Activated naive CD4-positive, alpha-beta T cell treated with anti-CD3 and anti-CD28 coated beads for 36 hours (primary cell): ENCODE measurements at regions of chr4 and their contacts with region 1.

Region 1: GRCh38 chr4:139656614-139657486 is 8.8 kb upstream of the MGST2 start:
- DNase-seq: peak; percentile 67
- H3K4me3 Mint-ChIP-seq: peak overlapping the region; percentile 57
- H3K27ac Mint-ChIP-seq: peak overlapping the region; percentile 83
- H3K4me1 Mint-ChIP-seq: peaks cover 24% of the 10 kb centered on the region
- H3K27me3 Mint-ChIP-seq: peaks cover 2% of the 10 kb centered on the region

Region 2: GRCh38 chr4:138734746-138735145 is 922.1 kb before region 1 on chr4:
- CTCF ChIA-PET with region 1: no interaction called
- intact Hi-C with region 1: no loop called
- DNase-seq: no peak
- H3K4me3 Mint-ChIP-seq: no peak overlapping the region
- H3K27ac Mint-ChIP-seq: no peak overlapping the region
- H3K4me1 Mint-ChIP-seq: no peaks in the 10 kb centered on the region
- H3K27me3 Mint-ChIP-seq: peaks cover 2% of the 10 kb centered on the region

Region 3: GRCh38 chr4:139266583-139267257 is 390.1 kb before region 1 on chr4:
- CTCF ChIA-PET with region 1: no interaction called
- intact Hi-C with region 1: loop called (anchors 1 kb)
- DNase-seq: peak; percentile 91
- H3K4me3 Mint-ChIP-seq: peak overlapping the region; percentile 52
- H3K27ac Mint-ChIP-seq: peak overlapping the region; percentile 60
- H3K4me1 Mint-ChIP-seq: peaks cover 18% of the 10 kb centered on the region
- H3K27me3 Mint-ChIP-seq: no peaks in the 10 kb centered on the region

Region 4: GRCh38 chr4:139685180-139685579 is 28.3 kb after region 1 on chr4:
- CTCF ChIA-PET with region 1: interaction called, 3 read pairs
- intact Hi-C with region 1: loop called (anchors 1 kb)
- DNase-seq: peak; percentile 34
- H3K4me3 Mint-ChIP-seq: no peak overlapping the region
- H3K27ac Mint-ChIP-seq: no peak overlapping the region
- H3K4me1 Mint-ChIP-seq: peaks cover 5% of the 10 kb centered on the region
- H3K27me3 Mint-ChIP-seq: no peaks in the 10 kb centered on the region

Region 5: DNA sequence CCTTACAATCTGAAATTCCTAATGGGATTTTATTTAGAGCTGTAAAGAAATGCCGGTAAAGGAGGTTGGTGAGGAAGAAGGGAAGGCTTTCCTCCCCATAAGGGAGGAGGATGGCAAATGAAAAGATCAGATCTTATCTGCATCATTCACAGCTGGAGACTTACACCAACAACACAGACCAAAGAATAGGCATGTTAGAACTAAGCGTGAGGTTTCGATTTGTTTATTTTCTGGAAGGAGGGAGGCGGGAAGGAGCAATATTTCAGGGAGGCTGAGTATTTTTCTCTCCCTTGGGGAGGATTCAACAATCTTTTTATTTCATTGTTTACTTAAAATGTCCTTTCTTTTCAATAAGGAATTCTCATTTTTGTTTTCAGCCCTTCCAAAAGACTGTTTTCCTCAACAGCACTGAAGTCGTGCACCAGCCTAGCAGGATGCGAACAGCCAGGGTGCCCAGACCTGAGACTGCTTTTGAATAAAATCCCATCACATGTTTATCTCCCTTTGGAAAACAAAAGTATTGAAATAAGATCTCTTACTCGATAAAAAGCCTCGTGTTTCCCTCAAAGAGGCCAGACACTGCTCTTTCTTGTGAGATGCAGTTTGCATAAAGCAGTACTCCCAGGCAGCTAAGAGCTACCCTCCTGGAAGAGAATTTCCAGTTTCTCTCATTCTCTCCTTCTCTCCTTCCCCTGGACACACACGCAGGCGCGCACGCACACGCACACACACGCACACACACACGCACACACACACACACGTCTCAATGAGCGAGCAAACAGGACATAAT is 244.9 kb after region 1 on chr4:
- CTCF ChIA-PET with region 1: no interaction called
- intact Hi-C with region 1: loop called (anchors 2 kb)
- DNase-seq: no peak
- H3K4me3 Mint-ChIP-seq: no peak overlapping the region
- H3K27ac Mint-ChIP-seq: no peak overlapping the region
- H3K4me1 Mint-ChIP-seq: peaks cover 14% of the 10 kb centered on the region
- H3K27me3 Mint-ChIP-seq: peaks cover 2% of the 10 kb centered on the region

Region 6: GRCh38 chr4:140071806-140072205 is 415.0 kb after region 1 on chr4:
- CTCF ChIA-PET with region 1: no interaction called
- intact Hi-C with region 1: loop called (anchors 5 kb)
- DNase-seq: peak; percentile 89
- H3K4me3 Mint-ChIP-seq: peak overlapping the region; percentile 46
- H3K27ac Mint-ChIP-seq: peak overlapping the region; percentile 39
- H3K4me1 Mint-ChIP-seq: peaks cover 41% of the 10 kb centered on the region
- H3K27me3 Mint-ChIP-seq: no peaks in the 10 kb centered on the region

Region 7: DNA sequence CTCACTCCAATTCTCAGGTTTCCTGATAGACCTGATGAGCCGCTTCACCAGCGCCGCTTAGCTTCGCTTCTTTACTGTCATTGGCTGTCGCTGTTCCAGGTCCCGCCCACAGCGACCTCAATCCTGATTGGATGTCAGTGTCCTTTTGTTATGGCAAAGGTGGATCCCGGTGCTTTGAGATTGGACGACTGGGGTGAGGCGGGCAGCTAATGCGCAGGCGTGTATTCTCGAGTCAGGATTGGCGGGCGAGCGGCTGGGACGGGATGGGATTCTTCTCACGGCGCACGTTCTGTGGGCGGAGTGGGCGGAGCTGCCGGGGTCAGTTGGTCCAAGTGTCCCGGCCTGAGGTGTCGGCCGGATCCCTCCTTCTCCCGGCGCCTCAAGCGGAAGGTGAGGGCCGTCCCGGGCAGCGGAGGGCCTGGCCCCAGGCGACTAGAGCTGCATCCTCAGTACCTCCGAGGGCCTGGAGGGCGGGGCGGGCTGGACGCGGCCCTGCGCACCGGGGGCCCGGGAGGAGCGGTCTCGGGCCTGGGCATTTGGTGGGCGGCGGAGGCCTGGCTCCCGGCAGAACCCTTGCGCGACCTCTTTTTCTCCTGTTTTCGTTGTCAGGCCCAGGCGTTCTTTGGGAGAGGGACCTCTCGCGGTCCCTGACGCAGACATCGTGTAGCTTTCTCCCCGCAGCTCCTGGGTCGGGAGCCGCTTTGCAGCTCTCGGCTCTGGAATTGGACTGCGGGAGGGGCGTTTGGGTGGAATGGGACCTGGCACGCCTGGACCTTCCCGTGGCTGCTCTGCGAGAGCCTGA is 716.7 kb after region 1 on chr4 and contains the start of gene SCOC:
- CTCF ChIA-PET with region 1: interaction called, 3 read pairs
- intact Hi-C with region 1: loop called (anchors 2 kb)
- DNase-seq: peak; percentile 99
- H3K4me3 Mint-ChIP-seq: no peak within 1 kb of the TSS
- H3K27ac Mint-ChIP-seq: peak within 1 kb of the TSS; percentile 69
- H3K4me1 Mint-ChIP-seq: peaks cover 33% of the 10 kb centered on the region
- H3K27me3 Mint-ChIP-seq: no peaks in the 10 kb centered on the region
- total RNA-seq, gene SCOC: 44.7 to 49.4 TPM